Activated naive CD4-positive, alpha-beta T cell treated with anti-CD3 and anti-CD28 coated beads for 36 hours (primary cell): ENCODE measurements at regions of chr6 and their contacts with region 1.

Region 1: GRCh38 chr6:47714802-47715201 is 16.4 kb downstream of the ADGRF4 start:
- DNase-seq: peak; percentile 57
- H3K4me3 Mint-ChIP-seq: no peak overlapping the region
- H3K27ac Mint-ChIP-seq: no peak overlapping the region
- H3K4me1 Mint-ChIP-seq: peaks cover 28% of the 10 kb centered on the region
- H3K27me3 Mint-ChIP-seq: peaks cover 21% of the 10 kb centered on the region

Region 2: DNA sequence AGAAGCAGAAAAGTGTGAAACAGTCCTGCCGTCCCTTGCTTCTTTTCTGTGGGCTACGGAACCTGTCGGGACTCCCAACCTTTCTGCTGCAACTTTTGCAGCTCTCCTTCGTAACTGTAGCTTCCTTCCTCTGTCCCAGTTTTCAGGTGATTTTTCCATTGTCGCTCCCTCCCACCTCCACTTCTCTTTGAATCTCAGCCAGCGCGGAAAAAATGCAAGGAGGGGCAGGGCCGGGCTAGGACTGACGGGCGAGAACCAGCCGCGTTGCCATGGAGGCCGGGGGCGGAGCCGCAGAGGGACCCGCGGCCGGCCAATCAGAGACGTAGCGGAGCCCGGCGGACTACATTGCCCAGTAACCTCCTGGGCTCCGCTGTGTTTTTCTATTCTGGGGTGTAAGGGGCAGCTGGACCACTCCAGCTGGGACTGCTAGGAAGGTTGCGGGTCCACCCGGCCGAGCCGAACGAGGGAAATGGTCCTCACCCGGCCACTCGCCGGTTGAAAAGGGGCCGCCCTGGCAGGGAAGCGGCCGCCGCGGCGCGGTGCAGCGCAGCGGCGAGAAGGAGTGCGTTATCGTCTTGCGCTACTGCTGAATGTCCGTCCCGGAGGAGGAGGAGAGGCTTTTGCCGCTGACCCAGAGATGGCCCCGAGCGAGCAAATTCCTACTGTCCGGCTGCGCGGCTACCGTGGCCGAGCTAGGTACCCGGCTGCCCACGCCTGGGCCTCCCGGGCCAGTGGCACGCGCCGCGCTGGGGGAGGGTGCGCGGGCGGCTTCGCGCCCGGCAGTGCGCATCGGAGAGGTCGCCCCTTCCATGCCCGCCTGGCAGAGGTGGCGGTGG is 1062.0 kb before region 1 on chr6 and contains the starts of genes CYP39A1 and SLC25A27:
- CTCF ChIA-PET with region 1: no interaction called
- intact Hi-C with region 1: loop called (anchors 10 kb)
- DNase-seq: peak; percentile 88
- H3K4me3 Mint-ChIP-seq: peak within 1 kb of the TSS; percentile 88
- H3K27ac Mint-ChIP-seq: peak within 1 kb of the TSS; percentile 11
- H3K4me1 Mint-ChIP-seq: peaks cover 13% of the 10 kb centered on the region
- H3K27me3 Mint-ChIP-seq: peaks cover 39% of the 10 kb centered on the region
- total RNA-seq, gene CYP39A1: not detected
- total RNA-seq, gene SLC25A27: 1.6 to 2.0 TPM

Region 3: GRCh38 chr6:47655719-47656595 is 58.8 kb before region 1 on chr6:
- CTCF ChIA-PET with region 1: no interaction called
- intact Hi-C with region 1: loop called (anchors 1 kb)
- DNase-seq: peak; percentile 73
- H3K4me3 Mint-ChIP-seq: no peak overlapping the region
- H3K27ac Mint-ChIP-seq: no peak overlapping the region
- H3K4me1 Mint-ChIP-seq: peaks cover 3% of the 10 kb centered on the region
- H3K27me3 Mint-ChIP-seq: peaks cover 4% of the 10 kb centered on the region

Region 4: GRCh38 chr6:47729019-47729418 is 14.2 kb after region 1 on chr6:
- CTCF ChIA-PET with region 1: interaction called, 6 read pairs
- intact Hi-C with region 1: loop called (anchors 1 kb)
- DNase-seq: peak; percentile 27
- H3K4me3 Mint-ChIP-seq: no peak overlapping the region
- H3K27ac Mint-ChIP-seq: peak overlapping the region; percentile 1
- H3K4me1 Mint-ChIP-seq: peaks cover 16% of the 10 kb centered on the region
- H3K27me3 Mint-ChIP-seq: peaks cover 5% of the 10 kb centered on the region

Region 5: GRCh38 chr6:47741807-47742206 is 27.0 kb after region 1 on chr6:
- CTCF ChIA-PET with region 1: no interaction called
- intact Hi-C with region 1: loop called (anchors 1 kb)
- DNase-seq: peak; percentile 41
- H3K4me3 Mint-ChIP-seq: no peak overlapping the region
- H3K27ac Mint-ChIP-seq: peak overlapping the region; percentile 59
- H3K4me1 Mint-ChIP-seq: peaks cover 18% of the 10 kb centered on the region
- H3K27me3 Mint-ChIP-seq: peaks cover 8% of the 10 kb centered on the region

Region 6: DNA sequence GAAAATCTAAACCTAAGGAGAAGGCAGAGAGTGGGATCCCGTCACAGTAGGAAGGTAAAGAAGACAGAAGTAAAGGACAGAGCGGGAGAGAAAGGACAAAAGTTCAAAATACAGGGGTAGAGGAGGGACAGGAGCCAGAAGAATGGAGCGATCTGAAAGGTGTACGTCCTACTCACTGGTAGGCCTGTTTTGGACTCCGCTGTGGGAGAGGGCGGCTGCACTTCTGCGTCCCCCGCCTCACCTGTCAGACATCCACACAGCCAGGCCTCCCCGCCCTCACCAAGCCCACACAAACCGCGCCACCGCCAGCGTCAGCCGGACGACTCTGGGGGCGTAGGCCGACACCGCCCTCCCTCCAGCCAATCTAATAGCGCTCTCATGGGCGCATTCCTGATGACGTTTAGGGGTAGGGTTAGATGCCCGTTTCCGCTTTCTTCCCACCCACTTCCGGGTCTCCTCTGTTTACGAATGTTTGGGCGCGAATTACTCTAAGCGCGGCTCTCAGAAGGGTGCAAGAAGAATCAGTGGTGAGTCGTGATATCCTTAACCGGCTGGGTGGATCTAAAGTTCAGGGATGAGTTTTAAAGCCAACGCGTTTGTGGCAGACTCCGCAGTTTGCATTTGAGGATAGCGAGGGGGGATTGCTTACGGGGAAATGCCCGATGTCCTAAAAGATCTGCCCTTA is 1748.3 kb after region 1 on chr6 and contains the starts of genes CENPQ and MMUT:
- CTCF ChIA-PET with region 1: no interaction called
- intact Hi-C with region 1: loop called (anchors 1 kb)
- DNase-seq: peak; percentile 96
- H3K4me3 Mint-ChIP-seq: peak within 1 kb of the TSS; percentile 96
- H3K27ac Mint-ChIP-seq: peak within 1 kb of the TSS; percentile 89
- H3K4me1 Mint-ChIP-seq: peaks cover 41% of the 10 kb centered on the region
- H3K27me3 Mint-ChIP-seq: no peaks in the 10 kb centered on the region
- total RNA-seq, gene CENPQ: 19.3 to 19.9 TPM
- total RNA-seq, gene MMUT: 15.1 to 15.2 TPM